PC-9 (cell line): ENCODE measurements at regions of chr6 and their contacts with region 1.

Region 1: GRCh38 chr6:36576561-36576960 is 17.6 kb upstream of the SRSF3 start:
- DNase-seq: no peak
- H3K4me3 ChIP-seq: no peak overlapping the region
- H3K27ac ChIP-seq: peak overlapping the region; percentile 73
- H3K4me1 ChIP-seq: peaks cover 63% of the 10 kb centered on the region
- H3K27me3 ChIP-seq: no peaks in the 10 kb centered on the region
- CTCF ChIP-seq: no peak

Region 2: GRCh38 chr6:36392621-36393020 is 183.9 kb before region 1 on chr6:
- CTCF ChIA-PET with region 1: no interaction called
- POLR2A ChIA-PET with region 1: interaction called, 26 read pairs
- intact Hi-C with region 1: no loop called
- DNase-seq: no peak
- H3K4me3 ChIP-seq: no peak overlapping the region
- H3K27ac ChIP-seq: no peak overlapping the region
- H3K4me1 ChIP-seq: no peaks in the 10 kb centered on the region
- H3K27me3 ChIP-seq: peaks cover 7% of the 10 kb centered on the region; the same call in 1 of the 2 replicates
- CTCF ChIP-seq: no peak

Region 3: GRCh38 chr6:36459501-36459900 is 117.1 kb before region 1 on chr6:
- CTCF ChIA-PET with region 1: no interaction called
- POLR2A ChIA-PET with region 1: interaction called, 18 read pairs
- intact Hi-C with region 1: no loop called
- DNase-seq: no peak
- H3K4me3 ChIP-seq: no peak overlapping the region
- H3K27ac ChIP-seq: no peak overlapping the region
- H3K4me1 ChIP-seq: peaks cover 10% of the 10 kb centered on the region
- H3K27me3 ChIP-seq: no peaks in the 10 kb centered on the region
- CTCF ChIP-seq: no peak

Region 4: DNA sequence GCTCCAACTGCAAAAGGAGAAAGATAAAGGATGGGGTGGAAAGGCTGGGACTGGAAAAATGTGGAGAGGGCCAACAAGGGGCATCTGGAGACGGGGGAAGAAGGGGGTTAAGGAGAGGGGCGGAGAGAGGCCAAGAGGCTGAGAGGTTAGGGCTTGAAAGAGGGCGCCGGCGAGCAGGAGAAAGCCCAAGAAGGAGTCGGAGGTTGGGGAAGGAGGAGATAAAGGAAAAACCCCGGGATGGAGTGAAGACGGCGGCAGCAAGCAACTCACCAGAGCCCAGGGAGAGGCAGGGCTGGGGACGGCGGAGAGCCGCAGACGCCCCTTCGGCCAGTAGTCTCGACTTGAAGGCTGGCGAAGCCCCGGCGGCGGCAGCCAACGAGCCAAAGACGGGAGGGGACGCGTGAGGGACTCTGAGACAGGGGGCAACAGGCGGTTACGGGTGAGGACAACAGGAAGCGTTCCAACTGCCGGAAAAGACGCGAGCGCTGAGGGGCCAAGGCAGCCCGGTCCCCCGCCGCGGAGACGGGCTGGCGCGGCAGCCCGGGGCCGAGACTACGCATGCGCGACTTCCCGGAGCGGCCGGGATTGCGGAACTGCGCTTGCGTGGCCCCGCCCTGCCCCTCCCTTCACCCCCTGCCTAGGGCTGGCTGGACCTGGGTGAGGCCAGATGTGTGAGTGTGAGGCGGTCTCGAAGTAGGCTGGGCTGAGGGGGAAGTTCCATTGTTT is 29.5 kb before region 1 on chr6 and contains the start of gene STK38:
- CTCF ChIA-PET with region 1: interaction called, 3 read pairs
- POLR2A ChIA-PET with region 1: interaction called, 12 read pairs
- intact Hi-C with region 1: loop called (anchors 1 kb)
- DNase-seq: peak; percentile 73 to 84
- H3K4me3 ChIP-seq: peak within 1 kb of the TSS; percentile 92
- H3K27ac ChIP-seq: peak within 1 kb of the TSS; percentile 51
- H3K4me1 ChIP-seq: peaks cover 36% of the 10 kb centered on the region
- H3K27me3 ChIP-seq: no peaks in the 10 kb centered on the region
- CTCF ChIP-seq: peak; percentile 32; the same call in 1 of the 2 replicates
- total RNA-seq, gene STK38: 45.7 and 53.3 TPM in 2 replicates

Region 5: GRCh38 chr6:36615018-36615761 is 38.6 kb after region 1 on chr6:
- CTCF ChIA-PET with region 1: interaction called, 21 read pairs
- POLR2A ChIA-PET with region 1: no interaction called
- intact Hi-C with region 1: no loop called
- DNase-seq: peak; percentile 43 to 63
- H3K4me3 ChIP-seq: no peak overlapping the region
- H3K27ac ChIP-seq: no peak overlapping the region
- H3K4me1 ChIP-seq: peaks cover 24% of the 10 kb centered on the region
- H3K27me3 ChIP-seq: no peaks in the 10 kb centered on the region
- CTCF ChIP-seq: peak; percentile 83

Region 6: GRCh38 chr6:36743538-36744303 is 167.2 kb after region 1 on chr6:
- CTCF ChIA-PET with region 1: no interaction called
- POLR2A ChIA-PET with region 1: no interaction called
- intact Hi-C with region 1: no loop called
- DNase-seq: no peak
- H3K4me3 ChIP-seq: no peak overlapping the region
- H3K27ac ChIP-seq: no peak overlapping the region
- H3K4me1 ChIP-seq: peaks cover 10% of the 10 kb centered on the region
- H3K27me3 ChIP-seq: no peaks in the 10 kb centered on the region
- CTCF ChIP-seq: no peak